ENCODE measurements at regions of chr2 and their contacts with region 1.

Region 1: DNA sequence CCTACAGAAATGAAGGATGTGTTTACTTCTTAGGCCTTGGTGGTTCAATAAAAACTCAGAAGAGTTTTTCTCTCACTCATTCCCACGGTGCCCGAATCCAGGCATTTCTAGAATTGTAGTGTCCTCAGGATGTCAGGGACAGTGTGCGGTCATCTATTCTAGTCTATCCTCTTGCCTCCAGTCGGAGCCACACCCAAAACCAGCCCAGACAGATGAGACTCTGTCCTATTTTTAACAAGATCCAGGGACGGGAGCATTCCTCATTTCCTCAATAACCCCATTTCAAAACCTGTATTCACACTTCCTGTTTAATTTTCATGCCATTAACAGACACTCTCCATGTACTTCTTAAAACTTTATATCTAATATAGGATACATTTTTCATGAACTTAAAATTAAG is 11.6 kb upstream of the RBMS1 start:
- DNase-seq: no peak
- ATAC-seq: no peak
- H3K4me3 ChIP-seq: no peak overlapping the region
- H3K4me3 Mint-ChIP-seq: no peak overlapping the region
- H3K27ac ChIP-seq: no peak overlapping the region
- H3K27ac Mint-ChIP-seq: peak overlapping the region in 1 of 9 donors; percentile 26
- H3K4me1 ChIP-seq: peaks cover 12% of the 10 kb centered on the region in 2 donors
- H3K4me1 Mint-ChIP-seq: peaks cover 9 to 42% (median 25%) of the 10 kb centered on the region in 7 donors
- H3K27me3 ChIP-seq: no peaks in the 10 kb centered on the region
- H3K27me3 Mint-ChIP-seq: no peaks in the 10 kb centered on the region

Region 2: GRCh38 chr2:160516547-160517365 is 11.5 kb after region 1 on chr2:
- CTCF ChIA-PET with region 1: interaction called, 3 read pairs
- POLR2A ChIA-PET with region 1: interaction called, 3 read pairs
- intact Hi-C with region 1: loop called in 1 of 2 experiments (anchors 1 kb)
- DNase-seq: peak in 1 of 9 donors; percentile 38
- ATAC-seq: no peak
- H3K4me3 ChIP-seq: no peak overlapping the region
- H3K4me3 Mint-ChIP-seq: peak overlapping the region in 6 of 10 donors; percentile 10 to 56 (median 42)
- H3K27ac ChIP-seq: no peak overlapping the region
- H3K27ac Mint-ChIP-seq: peak overlapping the region in 8 of 9 donors; percentile 14 to 83 (median 42)
- H3K4me1 ChIP-seq: peaks cover 0 to 7% of the 10 kb centered on the region in 2 donors
- H3K4me1 Mint-ChIP-seq: peaks cover 3 to 43% (median 36%) of the 10 kb centered on the region in 7 donors
- H3K27me3 ChIP-seq: no peaks in the 10 kb centered on the region
- H3K27me3 Mint-ChIP-seq: no peaks in the 10 kb centered on the region